ENCODE measurements at regions of chr13 and their contacts with region 1.

Region 1: GRCh38 chr13:95275322-95276036 is 25.8 kb downstream of the ABCC4 start:
- DNase-seq: no peak
- H3K4me3 ChIP-seq: no peak overlapping the region
- H3K27ac ChIP-seq: peak overlapping the region; percentile 67 to 83 (median 75)
- H3K4me1 ChIP-seq: peaks cover 14 to 49% (median 27%) of the 10 kb centered on the region in 4 donors
- H3K27me3 ChIP-seq: no peaks in the 10 kb centered on the region
- CTCF ChIP-seq: no peak
- EP300 ChIP-seq: no peak
- POLR2A ChIP-seq: no peak

Region 2: GRCh38 chr13:93834051-93834450 is 1441.4 kb before region 1 on chr13:
- in situ Hi-C with region 1: no loop called
- intact Hi-C with region 1: loop called (anchors 5 kb)
- DNase-seq: no peak
- H3K4me3 ChIP-seq: no peak overlapping the region
- H3K27ac ChIP-seq: no peak overlapping the region
- H3K4me1 ChIP-seq: no peaks in the 10 kb centered on the region
- H3K27me3 ChIP-seq: no peaks in the 10 kb centered on the region
- CTCF ChIP-seq: no peak
- EP300 ChIP-seq: no peak
- POLR2A ChIP-seq: no peak

Region 3: DNA sequence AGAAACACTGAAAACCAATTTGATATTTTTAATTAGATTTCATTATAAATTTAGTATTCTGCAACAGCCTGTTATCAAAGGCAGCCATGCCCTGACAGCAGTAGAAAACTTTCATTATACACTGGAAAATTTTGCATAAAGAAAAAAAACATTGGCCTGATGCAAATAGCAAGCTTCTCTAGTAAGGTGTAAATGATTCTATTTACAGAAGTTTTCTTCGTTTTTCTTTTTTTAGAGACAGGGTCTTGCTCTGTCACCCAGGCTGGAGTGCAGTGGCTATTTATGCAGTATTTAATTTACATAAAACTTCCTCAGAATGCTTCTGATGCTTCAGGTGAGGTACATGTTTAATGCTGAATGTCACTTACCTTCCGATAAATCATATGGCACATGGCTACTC is 41.2 kb before region 1 on chr13:
- in situ Hi-C with region 1: no loop called
- intact Hi-C with region 1: loop called (anchors 5 kb)
- DNase-seq: no peak
- H3K4me3 ChIP-seq: no peak overlapping the region
- H3K27ac ChIP-seq: no peak overlapping the region
- H3K4me1 ChIP-seq: peaks cover 0 to 8% (median 1%) of the 10 kb centered on the region in 4 donors
- H3K27me3 ChIP-seq: no peaks in the 10 kb centered on the region
- CTCF ChIP-seq: no peak
- EP300 ChIP-seq: no peak
- POLR2A ChIP-seq: no peak